ENCODE measurements at regions of chr7 and their contacts with region 1.

Region 1: GRCh38 chr7:151448261-151449252 is 8.6 kb upstream of the CRYGN start:
- DNase-seq: peak; percentile 67 to 87 (median 74)
- ATAC-seq: peak; percentile 89
- H3K4me3 ChIP-seq: peak overlapping the region; percentile 60
- H3K4me3 Mint-ChIP-seq: peak overlapping the region; percentile 90
- H3K27ac ChIP-seq: no peak overlapping the region
- H3K27ac Mint-ChIP-seq: peak overlapping the region; percentile 80
- H3K4me1 ChIP-seq: peaks cover 19% of the 10 kb centered on the region
- H3K4me1 Mint-ChIP-seq: peaks cover 18% of the 10 kb centered on the region
- H3K27me3 ChIP-seq: no peaks in the 10 kb centered on the region
- H3K27me3 Mint-ChIP-seq: peaks cover 4% of the 10 kb centered on the region
- CTCF ChIP-seq: peak; percentile 73

Region 2: DNA sequence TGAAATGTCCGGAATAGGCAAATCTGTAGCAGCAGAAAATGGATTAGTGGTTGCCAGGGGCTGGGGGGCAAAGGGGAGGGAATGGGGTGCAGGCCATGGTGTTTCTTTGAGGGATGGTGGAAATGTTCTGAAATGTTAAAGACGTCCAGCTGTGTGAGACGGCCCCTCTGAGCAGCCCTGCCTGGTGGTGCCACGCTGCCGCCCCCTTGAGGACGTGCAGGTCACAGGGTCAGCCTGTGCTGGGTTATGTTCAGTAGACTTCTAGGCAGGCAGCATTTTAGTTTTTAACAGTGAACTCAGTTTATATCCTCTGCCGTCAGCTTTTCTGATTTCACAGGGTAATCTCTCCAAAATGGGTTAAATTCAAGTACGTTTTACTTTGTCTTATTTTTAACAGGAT is 97.5 kb before region 1 on chr7:
- CTCF ChIA-PET with region 1: interaction called, 28 read pairs
- POLR2A ChIA-PET with region 1: interaction called, 16 read pairs
- intact Hi-C with region 1: loop called in 1 of 2 experiments (anchors 1 kb)
- DNase-seq: peak in 7 of 14 experiments; percentile 12 to 62 (median 37)
- ATAC-seq: no peak
- H3K4me3 ChIP-seq: no peak overlapping the region
- H3K4me3 Mint-ChIP-seq: peak overlapping the region; percentile 70
- H3K27ac ChIP-seq: peak overlapping the region; percentile 60 to 93
- H3K27ac Mint-ChIP-seq: peak overlapping the region; percentile 94
- H3K4me1 ChIP-seq: peaks cover 51% of the 10 kb centered on the region
- H3K4me1 Mint-ChIP-seq: peaks cover 59% of the 10 kb centered on the region
- H3K27me3 ChIP-seq: no peaks in the 10 kb centered on the region
- H3K27me3 Mint-ChIP-seq: no peaks in the 10 kb centered on the region
- CTCF ChIP-seq: no peak

Region 3: GRCh38 chr7:151408839-151409666 is 39.5 kb before region 1 on chr7:
- CTCF ChIA-PET with region 1: interaction called, 6 read pairs
- POLR2A ChIA-PET with region 1: interaction called, 11 read pairs
- intact Hi-C with region 1: loop called (anchors 1 to 2 kb)
- DNase-seq: peak in 13 of 14 experiments; percentile 27 to 96 (median 67)
- ATAC-seq: peak; percentile 84
- H3K4me3 ChIP-seq: peak overlapping the region; percentile 65
- H3K4me3 Mint-ChIP-seq: peak overlapping the region; percentile 80
- H3K27ac ChIP-seq: peak overlapping the region; percentile 53 to 93
- H3K27ac Mint-ChIP-seq: peak overlapping the region; percentile 79
- H3K4me1 ChIP-seq: peaks cover 59% of the 10 kb centered on the region
- H3K4me1 Mint-ChIP-seq: peaks cover 23% of the 10 kb centered on the region
- H3K27me3 ChIP-seq: peaks cover 22 to 23% of the 10 kb centered on the region in 2 experiments
- H3K27me3 Mint-ChIP-seq: peaks cover 33% of the 10 kb centered on the region
- CTCF ChIP-seq: no peak

Region 4: DNA sequence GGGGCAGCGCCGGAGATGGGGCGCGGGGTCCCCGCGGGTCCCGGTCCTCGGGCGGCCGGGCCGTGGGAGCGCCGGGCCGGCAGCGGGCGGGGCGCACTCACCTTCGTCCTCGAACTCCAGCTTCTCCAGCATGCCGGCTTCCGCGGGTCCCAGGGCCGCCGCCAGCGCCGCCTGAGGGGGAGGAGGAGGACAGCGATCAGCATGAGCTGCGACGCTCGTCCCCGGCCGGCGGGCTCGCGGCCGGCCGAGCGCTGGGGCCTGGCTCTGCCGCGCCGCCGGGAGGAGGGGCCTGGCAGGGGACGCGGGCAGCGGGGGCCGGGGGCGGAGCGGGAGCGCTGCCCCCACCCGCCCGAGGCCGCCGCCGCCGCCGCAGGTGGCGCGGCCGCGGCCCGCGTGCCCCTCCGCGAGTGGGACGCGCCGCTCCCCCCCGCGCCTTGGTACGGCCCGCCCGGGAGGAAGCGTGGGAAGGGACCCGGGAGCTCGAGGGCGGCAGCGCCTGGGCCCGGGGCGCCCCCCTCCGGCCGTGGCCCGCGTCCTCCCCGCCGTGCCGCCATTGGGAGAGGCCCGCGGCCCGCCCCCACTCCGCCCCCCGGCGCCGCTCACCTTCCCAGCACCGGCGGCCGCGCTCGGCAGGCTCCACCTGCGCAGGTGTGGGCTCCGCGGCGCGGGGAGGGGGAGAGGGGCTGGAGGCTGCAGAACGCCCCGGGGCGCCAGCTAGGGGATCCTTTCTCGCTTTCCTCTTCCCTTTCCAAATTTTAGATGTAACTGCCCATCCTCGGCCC is 183.6 kb after region 1 on chr7:
- CTCF ChIA-PET with region 1: interaction called, 11 read pairs
- POLR2A ChIA-PET with region 1: interaction called, 4 read pairs
- intact Hi-C with region 1: loop called in 1 of 2 experiments (anchors 5 kb)
- DNase-seq: peak; percentile 76 to 96 (median 89)
- ATAC-seq: peak; percentile 83
- H3K4me3 ChIP-seq: peak overlapping the region; percentile 68
- H3K4me3 Mint-ChIP-seq: peak overlapping the region; percentile 95
- H3K27ac ChIP-seq: peak overlapping the region; percentile 75 to 82
- H3K27ac Mint-ChIP-seq: peak overlapping the region; percentile 99
- H3K4me1 ChIP-seq: peaks cover 15% of the 10 kb centered on the region
- H3K4me1 Mint-ChIP-seq: peaks cover 45% of the 10 kb centered on the region
- H3K27me3 ChIP-seq: no peaks in the 10 kb centered on the region
- H3K27me3 Mint-ChIP-seq: no peaks in the 10 kb centered on the region
- CTCF ChIP-seq: no peak